Adrenal gland (tissue), 19 donors: ENCODE measurements at regions of chr2 and their contacts with region 1.

Region 1: DNA sequence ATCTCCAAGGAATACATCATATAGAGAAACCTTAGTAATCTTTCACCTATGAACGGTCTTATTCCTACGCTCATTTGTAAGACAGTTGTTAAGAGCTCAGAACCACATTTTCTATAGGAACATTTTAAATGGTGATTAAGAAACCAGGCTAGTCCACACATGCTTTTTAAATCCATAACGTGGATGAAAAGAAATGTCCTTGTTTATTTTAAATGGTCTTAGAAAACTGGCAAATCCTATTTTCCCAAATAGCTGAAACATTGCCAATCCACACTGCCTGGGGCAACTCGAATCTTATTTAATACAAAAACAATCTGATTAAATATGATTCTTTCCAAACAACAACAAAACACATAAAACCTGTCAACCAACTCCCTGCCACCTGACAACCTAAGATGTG is 23.7 kb downstream of the METTL8 start:
- DNase-seq: no peak
- H3K4me3 ChIP-seq: no peak overlapping the region
- H3K27ac ChIP-seq: no peak overlapping the region
- H3K4me1 ChIP-seq: no peaks in the 10 kb centered on the region
- H3K27me3 ChIP-seq: no peaks in the 10 kb centered on the region
- CTCF ChIP-seq: no peak
- POLR2A ChIP-seq: no peak

Region 2: DNA sequence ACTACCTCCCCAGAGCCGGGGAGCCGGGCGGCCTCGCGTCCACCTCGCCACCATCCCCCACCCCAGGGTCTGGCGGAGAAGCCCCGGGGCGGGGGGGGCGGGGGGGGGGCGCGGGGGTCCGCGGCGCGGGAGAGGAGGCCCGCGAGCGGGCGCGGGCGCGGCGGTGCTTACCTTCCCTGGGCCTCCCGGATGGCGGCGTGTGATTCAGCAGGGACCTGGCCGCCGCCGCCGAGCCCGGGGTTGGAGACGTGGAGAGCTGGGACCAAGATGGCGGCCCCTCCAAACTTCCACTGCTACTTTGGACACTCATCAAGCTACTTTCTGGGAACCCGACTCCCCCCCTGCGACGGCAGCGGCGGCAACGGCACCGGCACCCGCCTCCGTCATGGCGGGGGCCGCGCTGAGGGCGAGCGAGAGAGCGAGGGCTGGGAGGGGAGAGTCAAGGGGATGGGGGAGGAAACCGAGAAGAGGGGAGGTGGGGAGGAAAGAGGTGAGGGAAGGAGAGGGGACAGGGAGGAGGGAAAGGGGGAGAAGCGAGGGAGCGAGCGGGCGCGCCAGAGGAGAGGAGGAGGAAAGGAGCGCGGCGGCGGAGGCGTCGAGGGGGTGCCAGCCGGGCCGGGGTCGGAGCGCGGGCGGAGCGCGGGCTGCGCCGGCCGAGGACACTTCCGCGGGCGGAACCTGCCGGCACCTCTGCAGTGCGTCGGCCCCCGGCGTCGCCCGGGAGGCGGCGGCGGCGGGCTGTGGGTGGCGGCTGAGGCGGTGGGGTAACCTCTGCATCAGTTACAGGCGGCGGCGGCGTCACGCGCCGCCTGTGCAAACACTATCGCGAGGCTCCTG is 249.8 kb before region 1 on chr2 and contains the start of gene TLK1:
- intact Hi-C with region 1: loop called in 1 of 2 experiments (anchors 5 kb)
- DNase-seq: peak; percentile 72 to 83 (median 75)
- H3K4me3 ChIP-seq: peak within 1 kb of the TSS; percentile 55 to 88 (median 82)
- H3K27ac ChIP-seq: peak within 1 kb of the TSS; percentile 89 to 99 (median 97)
- H3K4me1 ChIP-seq: peaks cover 10 to 37% of the 10 kb centered on the region in 2 donors
- H3K27me3 ChIP-seq: no peaks in the 10 kb centered on the region
- CTCF ChIP-seq: peak in 1 of 6 experiments; percentile 19
- POLR2A ChIP-seq: peak; percentile 58 to 76
- total RNA-seq, gene TLK1: 25.7 to 84.0 (median 56.0) TPM